PC-9 (cell line): ENCODE measurements at regions of chr2 and their contacts with region 1.

Region 1: DNA sequence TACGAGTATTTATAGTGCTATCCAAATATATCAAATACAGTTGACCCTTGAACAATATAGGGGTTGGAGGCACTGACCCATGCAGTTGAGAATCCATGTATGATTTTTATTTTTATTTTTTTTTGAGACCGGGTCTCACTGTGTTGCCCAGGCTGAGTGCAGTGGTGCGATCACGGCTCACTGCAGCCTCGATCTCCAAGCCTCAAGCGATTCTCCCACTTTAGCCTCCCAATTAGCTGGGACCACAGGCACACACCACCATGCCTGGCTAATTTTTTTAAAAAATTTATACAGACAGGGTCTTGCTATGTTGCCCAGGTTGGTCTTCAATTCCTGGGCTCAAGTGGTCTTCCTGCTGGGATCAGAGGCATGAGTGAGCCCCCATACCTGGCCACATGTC is 70.6 kb downstream of the GORASP2 start:
- DNase-seq: no peak
- H3K4me3 ChIP-seq: no peak overlapping the region
- H3K27ac ChIP-seq: no peak overlapping the region
- H3K4me1 ChIP-seq: no peaks in the 10 kb centered on the region
- H3K27me3 ChIP-seq: no peaks in the 10 kb centered on the region
- CTCF ChIP-seq: no peak

Region 2: DNA sequence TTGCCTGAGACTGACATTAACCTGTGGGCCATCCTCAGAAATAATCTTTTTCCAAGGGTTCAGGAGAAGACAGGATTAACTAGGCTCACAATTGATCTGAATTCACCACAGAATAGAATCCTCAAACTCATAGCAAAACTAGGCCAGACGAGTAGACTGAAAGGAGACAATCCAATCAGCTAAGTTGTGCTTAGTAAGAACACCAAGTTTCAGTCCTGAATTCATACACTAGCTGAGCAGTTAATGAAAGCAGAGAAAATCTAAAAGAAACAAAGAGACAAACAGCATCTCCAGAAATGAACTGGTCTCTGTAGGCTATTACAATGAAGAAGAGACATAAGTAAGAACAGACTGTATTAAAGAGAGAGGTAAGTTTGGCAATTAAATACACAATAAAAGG is 18.9 kb after region 1 on chr2:
- CTCF ChIA-PET with region 1: no interaction called
- POLR2A ChIA-PET with region 1: no interaction called
- intact Hi-C with region 1: no loop called
- DNase-seq: no peak
- H3K4me3 ChIP-seq: no peak overlapping the region
- H3K27ac ChIP-seq: no peak overlapping the region
- H3K4me1 ChIP-seq: peaks cover 11% of the 10 kb centered on the region
- H3K27me3 ChIP-seq: no peaks in the 10 kb centered on the region
- CTCF ChIP-seq: no peak

Region 3: DNA sequence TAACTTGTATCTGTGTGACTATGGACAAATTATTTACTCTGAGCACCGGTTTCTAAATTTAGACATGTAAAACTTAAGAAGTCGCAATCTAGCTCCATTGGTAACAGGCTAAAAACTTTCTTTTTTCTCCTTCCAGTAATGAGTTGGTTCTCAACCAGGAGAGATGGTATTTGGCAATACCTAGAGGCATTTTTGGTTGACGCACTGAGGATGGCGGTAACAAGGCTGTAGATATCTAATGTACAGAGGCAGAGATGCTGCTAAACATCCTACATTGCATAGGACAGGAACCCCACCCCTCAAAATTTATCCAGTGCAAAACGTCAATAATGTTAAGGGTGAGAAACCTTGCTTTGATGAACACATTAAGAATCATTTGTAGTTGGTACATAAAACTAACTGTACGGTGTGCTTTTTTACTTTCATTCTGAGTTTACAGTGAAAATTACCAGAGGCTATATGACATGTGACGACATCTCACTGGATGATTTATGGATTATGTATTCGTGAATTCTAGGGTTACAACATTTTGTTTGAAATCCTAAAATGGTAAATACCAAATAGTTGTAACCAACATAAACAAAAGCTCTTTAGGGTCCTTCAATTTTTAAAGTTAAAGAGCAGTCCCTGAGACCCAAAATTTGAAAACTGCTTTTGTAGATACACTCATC is 69.8 kb after region 1 on chr2:
- CTCF ChIA-PET with region 1: no interaction called
- POLR2A ChIA-PET with region 1: no interaction called
- intact Hi-C with region 1: no loop called
- DNase-seq: no peak
- H3K4me3 ChIP-seq: no peak overlapping the region
- H3K27ac ChIP-seq: no peak overlapping the region
- H3K4me1 ChIP-seq: no peaks in the 10 kb centered on the region
- H3K27me3 ChIP-seq: no peaks in the 10 kb centered on the region
- CTCF ChIP-seq: no peak

Region 4: DNA sequence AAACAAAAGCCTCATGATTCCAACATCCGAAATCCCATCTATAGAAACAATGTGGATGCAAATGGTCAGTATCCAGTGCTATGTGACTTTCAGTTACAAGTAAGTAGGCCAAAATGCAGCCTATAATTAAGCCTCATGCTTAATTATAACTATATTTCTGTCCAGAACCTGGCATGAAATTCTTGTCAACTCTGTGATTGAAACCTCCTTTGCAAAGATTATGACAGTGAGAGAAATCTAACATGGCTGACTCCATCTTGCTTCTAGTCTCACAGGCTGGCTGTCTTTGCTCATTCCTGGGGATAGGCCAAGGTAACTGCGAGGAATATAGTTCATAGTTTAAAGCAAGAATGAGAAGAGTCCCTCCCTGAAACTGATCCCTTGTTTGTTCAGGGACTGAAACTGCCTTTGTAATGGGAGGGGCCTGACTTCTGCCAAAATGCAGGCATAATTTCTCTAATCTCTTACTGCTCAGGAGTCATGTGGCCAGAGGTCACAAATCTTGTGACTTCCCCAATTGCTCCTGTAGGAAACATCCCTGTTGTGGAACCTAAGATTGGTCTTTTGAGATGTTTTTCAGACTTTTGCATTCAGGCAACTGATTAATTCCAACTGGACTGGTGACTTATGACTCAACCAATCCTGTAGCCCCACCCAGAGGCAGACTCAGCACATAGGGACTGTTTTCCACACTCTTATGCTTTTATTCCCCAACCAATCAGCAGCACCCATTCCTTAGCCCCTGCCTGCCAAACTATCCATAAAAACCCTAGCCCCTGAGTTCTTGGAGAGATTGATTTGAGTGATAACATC is 245.5 kb after region 1 on chr2:
- CTCF ChIA-PET with region 1: no interaction called
- POLR2A ChIA-PET with region 1: interaction called, 11 read pairs
- intact Hi-C with region 1: no loop called
- DNase-seq: peak; percentile 13 to 67
- H3K4me3 ChIP-seq: no peak overlapping the region
- H3K27ac ChIP-seq: peak overlapping the region; percentile 99
- H3K4me1 ChIP-seq: peaks cover 26% of the 10 kb centered on the region
- H3K27me3 ChIP-seq: no peaks in the 10 kb centered on the region
- CTCF ChIP-seq: no peak